ENCODE measurements at regions of chr9 and their contacts with region 1.

Region 1: DNA sequence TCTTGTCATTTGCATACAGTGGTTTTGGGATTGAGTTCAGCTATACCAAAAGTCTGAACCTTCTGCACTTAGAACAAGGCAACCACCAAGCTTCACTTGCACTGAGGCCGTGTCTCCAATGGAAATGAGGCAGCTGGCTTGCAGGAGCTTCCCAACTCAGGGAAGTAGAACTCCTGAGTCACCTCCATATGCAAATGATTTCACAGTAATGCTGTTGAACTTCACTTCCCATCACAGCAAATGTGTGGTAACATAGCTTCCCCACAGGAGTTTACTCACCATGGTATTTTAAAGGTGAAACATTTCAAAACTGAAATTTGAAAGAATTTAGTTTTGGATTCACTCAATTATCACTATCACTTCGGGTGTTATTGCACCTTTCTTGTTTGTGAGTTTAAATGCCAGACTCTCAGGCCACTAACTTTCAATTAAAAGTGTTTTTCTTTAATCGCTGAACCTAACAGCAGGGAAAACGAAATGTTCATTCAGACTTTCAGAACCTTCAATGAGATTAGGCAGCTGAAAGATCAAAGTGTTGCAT is 9.0 kb downstream of the CD274 start:
- DNase-seq: peak; percentile 61
- H3K4me3 Mint-ChIP-seq: peak overlapping the region; percentile 57
- H3K27ac Mint-ChIP-seq: peak overlapping the region; percentile 84
- H3K4me1 Mint-ChIP-seq: peaks cover 65% of the 10 kb centered on the region
- H3K27me3 Mint-ChIP-seq: no peaks in the 10 kb centered on the region

Region 2: GRCh38 chr9:3478549-3478953 is 1980.8 kb before region 1 on chr9:
- CTCF ChIA-PET with region 1: no interaction called
- intact Hi-C with region 1: loop called (anchors 5 kb)
- DNase-seq: peak; percentile 50
- H3K4me3 Mint-ChIP-seq: peak overlapping the region; percentile 43
- H3K27ac Mint-ChIP-seq: peak overlapping the region; percentile 83
- H3K4me1 Mint-ChIP-seq: peaks cover 72% of the 10 kb centered on the region
- H3K27me3 Mint-ChIP-seq: no peaks in the 10 kb centered on the region

Region 3: GRCh38 chr9:4939118-4939561 is 520.2 kb before region 1 on chr9:
- CTCF ChIA-PET with region 1: no interaction called
- intact Hi-C with region 1: loop called (anchors 5 kb)
- DNase-seq: no peak
- H3K4me3 Mint-ChIP-seq: no peak overlapping the region
- H3K27ac Mint-ChIP-seq: peak overlapping the region; percentile 88
- H3K4me1 Mint-ChIP-seq: peaks cover 79% of the 10 kb centered on the region
- H3K27me3 Mint-ChIP-seq: no peaks in the 10 kb centered on the region

Region 4: GRCh38 chr9:5510360-5510931 is 51.1 kb after region 1 on chr9 and contains the start of gene PDCD1LG2:
- CTCF ChIA-PET with region 1: no interaction called
- intact Hi-C with region 1: loop called (anchors 1 kb)
- DNase-seq: peak; percentile 59
- H3K4me3 Mint-ChIP-seq: peak within 1 kb of the TSS; percentile 27
- H3K27ac Mint-ChIP-seq: peak within 1 kb of the TSS; percentile 54
- H3K4me1 Mint-ChIP-seq: peaks cover 31% of the 10 kb centered on the region
- H3K27me3 Mint-ChIP-seq: no peaks in the 10 kb centered on the region
- total RNA-seq, gene PDCD1LG2: 0.10 TPM in 1 of 2 experiments, not detected in the other

Region 5: GRCh38 chr9:5582835-5583195 is 123.5 kb after region 1 on chr9:
- CTCF ChIA-PET with region 1: interaction called, 7 read pairs
- intact Hi-C with region 1: loop called (anchors 1 kb)
- DNase-seq: peak; percentile 72
- H3K4me3 Mint-ChIP-seq: peak overlapping the region; percentile 27
- H3K27ac Mint-ChIP-seq: peak overlapping the region; percentile 78
- H3K4me1 Mint-ChIP-seq: peaks cover 66% of the 10 kb centered on the region
- H3K27me3 Mint-ChIP-seq: no peaks in the 10 kb centered on the region

Region 6: DNA sequence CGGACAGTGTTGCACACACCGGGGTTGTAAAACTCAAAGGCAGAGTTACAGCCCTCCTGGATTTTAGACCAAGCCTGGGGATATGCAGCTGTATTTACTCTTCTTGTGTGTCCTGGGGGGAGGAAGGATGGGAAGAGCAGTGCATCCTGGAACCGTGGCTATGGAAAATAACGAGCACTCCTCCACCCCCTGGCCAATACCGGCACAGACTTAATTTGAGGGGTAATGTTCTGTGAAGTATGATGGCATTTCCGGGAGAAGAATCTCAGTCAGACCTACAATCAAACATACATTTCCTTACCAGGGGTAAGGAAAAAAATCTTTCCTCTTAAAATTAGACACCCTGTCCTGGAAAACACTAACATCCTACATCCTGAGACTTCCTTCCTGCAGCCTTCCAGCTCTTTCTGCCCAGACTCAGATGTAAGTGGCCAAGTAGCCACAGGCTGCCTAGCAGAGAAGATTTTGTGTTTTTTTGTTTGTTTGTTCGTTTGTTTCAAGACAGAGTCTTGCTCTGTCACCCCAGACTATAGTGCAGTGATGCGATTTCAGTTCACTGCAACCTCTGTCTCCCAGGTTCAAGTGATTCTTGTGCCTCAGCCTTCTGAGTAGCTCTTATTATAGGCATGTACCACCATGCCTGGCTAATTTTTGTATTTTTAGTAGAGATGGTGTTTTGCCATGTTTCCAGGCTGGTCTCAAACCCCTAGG is 384.6 kb after region 1 on chr9:
- CTCF ChIA-PET with region 1: no interaction called
- intact Hi-C with region 1: loop called (anchors 2 kb)
- DNase-seq: peak; percentile 39
- H3K4me3 Mint-ChIP-seq: peak overlapping the region; percentile 33
- H3K27ac Mint-ChIP-seq: peak overlapping the region; percentile 74
- H3K4me1 Mint-ChIP-seq: peaks cover 57% of the 10 kb centered on the region
- H3K27me3 Mint-ChIP-seq: no peaks in the 10 kb centered on the region

Region 7: GRCh38 chr9:6008169-6008979 is 549.0 kb after region 1 on chr9:
- CTCF ChIA-PET with region 1: no interaction called
- intact Hi-C with region 1: loop called (anchors 5 kb)
- DNase-seq: peak; percentile 98
- H3K4me3 Mint-ChIP-seq: peak overlapping the region; percentile 76
- H3K27ac Mint-ChIP-seq: peak overlapping the region; percentile 82
- H3K4me1 Mint-ChIP-seq: peaks cover 61% of the 10 kb centered on the region
- H3K27me3 Mint-ChIP-seq: no peaks in the 10 kb centered on the region